Panc1 (cell line): ENCODE measurements at regions of chr12 and their contacts with region 1.

Region 1: GRCh38 chr12:107884769-107885694 is 110.5 kb downstream of the ASCL4 start:
- DNase-seq: no peak
- ATAC-seq: peak; percentile 90
- H3K4me3 ChIP-seq: no peak overlapping the region
- H3K27ac ChIP-seq: no peak overlapping the region
- H3K4me1 ChIP-seq: no peaks in the 10 kb centered on the region
- H3K27me3 ChIP-seq: peaks cover 4% of the 10 kb centered on the region
- CTCF ChIP-seq: peak; percentile 85

Region 2: DNA sequence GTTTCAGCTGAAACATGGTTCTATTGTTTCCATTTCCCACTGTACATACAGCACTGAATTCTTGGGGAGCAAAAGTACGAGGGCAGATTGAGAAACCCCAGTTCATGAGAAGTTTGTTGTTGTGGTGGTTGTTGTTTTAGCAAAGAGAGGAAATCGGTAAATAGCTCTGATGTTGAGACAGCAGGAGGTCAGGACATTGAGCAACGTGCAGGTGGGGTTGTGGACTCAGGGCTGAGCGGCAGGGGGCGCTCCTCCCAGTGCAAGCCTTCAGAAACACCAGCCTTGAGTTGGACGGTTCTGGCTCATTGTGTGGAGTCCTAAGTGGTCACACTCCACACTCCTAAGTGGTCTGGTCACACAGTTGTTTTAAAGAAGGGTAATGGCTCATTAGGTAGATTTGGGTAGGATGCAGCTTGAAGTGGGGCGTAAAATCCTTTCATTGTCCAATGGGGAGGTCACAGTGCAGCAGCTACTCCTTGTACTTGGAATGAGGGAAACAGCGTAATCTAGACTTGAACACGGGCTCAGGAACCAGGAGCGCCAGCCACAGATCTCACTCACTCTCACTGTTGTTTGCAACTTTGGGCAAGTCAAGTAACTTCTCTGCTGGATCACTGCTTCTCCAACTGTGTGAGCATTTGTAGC is 213.9 kb before region 1 on chr12:
- CTCF ChIA-PET with region 1: interaction called, 19 read pairs
- POLR2A ChIA-PET with region 1: interaction called, 10 read pairs
- in situ Hi-C with region 1: no loop called
- intact Hi-C with region 1: loop called (anchors 2 kb)
- DNase-seq: no peak
- ATAC-seq: peak; percentile 66; the same call in 1 of the 2 replicates
- H3K4me3 ChIP-seq: no peak overlapping the region
- H3K27ac ChIP-seq: no peak overlapping the region
- H3K4me1 ChIP-seq: no peaks in the 10 kb centered on the region
- H3K27me3 ChIP-seq: peaks cover 20% of the 10 kb centered on the region
- CTCF ChIP-seq: peak; percentile 80

Region 3: GRCh38 chr12:107677671-107678070 is 207.4 kb before region 1 on chr12:
- CTCF ChIA-PET with region 1: interaction called, 19 read pairs
- POLR2A ChIA-PET with region 1: interaction called, 10 read pairs
- in situ Hi-C with region 1: no loop called
- intact Hi-C with region 1: loop called (anchors 2 kb)
- DNase-seq: no peak
- ATAC-seq: no peak
- H3K4me3 ChIP-seq: no peak overlapping the region
- H3K27ac ChIP-seq: no peak overlapping the region
- H3K4me1 ChIP-seq: no peaks in the 10 kb centered on the region
- H3K27me3 ChIP-seq: peaks cover 15% of the 10 kb centered on the region
- CTCF ChIP-seq: no peak

Region 4: DNA sequence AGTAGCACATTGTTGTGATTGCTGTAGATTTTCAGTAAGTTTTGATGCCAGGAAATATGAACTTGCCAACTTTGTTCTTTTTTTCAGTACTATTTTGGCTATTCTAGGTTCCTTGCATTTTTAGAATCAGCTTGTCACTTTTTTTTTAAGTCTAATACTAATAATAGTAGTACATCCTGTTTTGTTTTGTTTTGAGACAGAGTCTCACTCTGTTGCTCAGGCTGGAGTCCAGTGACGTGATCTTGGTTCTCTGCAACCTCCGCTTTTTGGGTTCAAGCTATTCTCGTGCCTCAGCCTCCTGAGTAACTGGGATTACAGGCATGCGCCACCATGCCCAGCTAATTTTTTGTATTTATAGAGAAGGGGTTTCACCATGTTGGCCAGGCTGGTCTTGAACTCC is 182.9 kb before region 1 on chr12:
- CTCF ChIA-PET with region 1: no interaction called
- POLR2A ChIA-PET with region 1: no interaction called
- in situ Hi-C with region 1: no loop called
- intact Hi-C with region 1: loop called (anchors 5 kb)
- DNase-seq: no peak
- ATAC-seq: no peak
- H3K4me3 ChIP-seq: no peak overlapping the region
- H3K27ac ChIP-seq: no peak overlapping the region
- H3K4me1 ChIP-seq: no peaks in the 10 kb centered on the region
- H3K27me3 ChIP-seq: no peaks in the 10 kb centered on the region
- CTCF ChIP-seq: no peak

Region 5: GRCh38 chr12:107760809-107761501 is 124.1 kb before region 1 on chr12 and contains the start of gene PRDM4:
- CTCF ChIA-PET with region 1: no interaction called
- POLR2A ChIA-PET with region 1: no interaction called
- in situ Hi-C with region 1: no loop called
- intact Hi-C with region 1: loop called (anchors 5 kb)
- DNase-seq: peak; percentile 52
- ATAC-seq: peak; percentile 100
- H3K4me3 ChIP-seq: peak within 1 kb of the TSS; percentile 98
- H3K27ac ChIP-seq: peak within 1 kb of the TSS; percentile 93
- H3K4me1 ChIP-seq: peaks cover 14% of the 10 kb centered on the region
- H3K27me3 ChIP-seq: no peaks in the 10 kb centered on the region
- CTCF ChIP-seq: peak; percentile 77
- total RNA-seq, gene PRDM4: 28.9 TPM

Region 6: DNA sequence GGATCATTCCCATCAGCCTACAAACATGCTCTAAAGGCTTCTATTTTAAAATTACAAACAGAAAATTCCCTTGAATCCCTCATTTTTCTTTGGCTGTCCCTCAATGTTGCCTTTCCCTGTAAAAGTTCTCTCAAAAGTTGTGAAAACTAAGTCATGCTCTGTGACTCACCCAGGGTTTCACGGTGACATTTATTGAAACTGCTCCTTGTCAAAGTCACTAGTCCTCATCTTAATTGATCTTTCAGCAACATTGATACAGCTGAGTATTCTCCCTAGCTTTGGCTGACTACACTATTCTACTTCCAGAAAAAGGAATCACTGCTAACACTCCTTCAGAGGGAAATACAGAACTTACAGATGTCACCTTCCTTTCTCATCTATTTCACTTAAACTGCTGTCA is 44.8 kb before region 1 on chr12:
- CTCF ChIA-PET with region 1: no interaction called
- POLR2A ChIA-PET with region 1: no interaction called
- in situ Hi-C with region 1: no loop called
- intact Hi-C with region 1: no loop called
- DNase-seq: no peak
- ATAC-seq: no peak
- H3K4me3 ChIP-seq: no peak overlapping the region
- H3K27ac ChIP-seq: no peak overlapping the region
- H3K4me1 ChIP-seq: no peaks in the 10 kb centered on the region
- H3K27me3 ChIP-seq: peaks cover 13% of the 10 kb centered on the region
- CTCF ChIP-seq: no peak